ENCODE measurements at regions of chr5 and their contacts with region 1.

Region 1: GRCh38 chr5:154179846-154180710 is 10.5 kb upstream of the GALNT10 start:
- DNase-seq: peak in 4 of 10 donors; percentile 23 to 88 (median 40)

Region 2: DNA sequence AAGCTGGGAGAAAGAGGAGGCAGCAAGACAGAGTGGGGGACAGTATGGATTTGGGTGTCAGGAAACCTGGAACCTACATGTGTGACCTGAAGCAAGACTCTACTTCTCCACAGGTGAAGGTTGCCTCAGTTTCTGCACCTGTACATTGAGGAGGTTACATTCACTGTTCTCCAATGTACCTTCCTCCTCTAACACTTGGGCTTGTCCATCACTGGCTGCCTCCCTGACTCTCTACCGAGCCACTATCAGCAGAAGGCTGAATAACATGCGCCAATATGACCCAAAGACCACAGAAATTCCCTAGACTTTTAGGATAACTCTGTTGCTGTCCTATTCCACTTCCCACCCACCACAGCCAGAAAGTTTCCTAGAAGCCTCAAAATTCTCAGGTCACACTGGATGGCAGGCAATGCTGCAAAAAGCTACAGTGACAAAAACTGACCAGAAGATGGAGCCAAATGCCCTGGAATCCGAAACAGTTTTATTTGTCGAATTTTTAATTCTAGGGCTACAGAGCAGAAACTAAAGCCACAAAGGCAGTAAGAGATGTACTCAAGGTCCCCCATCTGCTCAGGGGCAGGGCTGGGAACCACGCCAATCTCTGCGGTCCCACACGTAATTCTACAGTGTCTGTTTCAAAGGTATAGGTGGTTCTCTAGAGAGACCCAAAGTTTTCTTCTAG is 205.8 kb before region 1 on chr5:
- intact Hi-C with region 1: loop called (anchors 5 kb)
- DNase-seq: peak in 3 of 10 donors; percentile 24 to 72 (median 26)

Region 3: GRCh38 chr5:154072414-154073171 is 107.5 kb before region 1 on chr5:
- intact Hi-C with region 1: loop called (anchors 1 kb)
- DNase-seq: peak; percentile 64 to 97 (median 88)

Region 4: GRCh38 chr5:154276973-154277331 is 96.9 kb after region 1 on chr5:
- intact Hi-C with region 1: no loop called
- DNase-seq: no peak